AG04449 (cell line): ENCODE measurements at regions of chr7 and their contacts with region 1.

Region 1: DNA sequence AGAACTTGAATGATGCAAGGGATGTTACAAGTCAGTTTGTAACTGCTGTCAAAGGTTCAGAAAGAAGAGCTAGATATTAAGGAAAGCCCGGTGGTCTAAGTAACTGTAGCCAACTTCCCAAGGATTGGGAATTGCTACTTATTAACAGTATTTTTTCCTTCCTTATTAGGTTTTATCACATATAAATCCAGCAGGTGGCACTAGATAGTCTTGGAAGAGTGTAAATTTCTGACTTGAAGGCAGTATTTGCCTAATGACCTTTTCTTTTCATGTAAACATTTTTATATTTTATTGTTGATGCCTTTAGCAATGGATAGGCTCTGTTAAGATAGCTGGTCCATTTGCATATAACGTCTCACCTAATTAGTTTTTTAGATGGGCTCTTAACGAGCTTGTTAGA is 51.2 kb downstream of the ANLN start:
- DNase-seq: no peak
- H3K4me3 ChIP-seq: no peak overlapping the region
- CTCF ChIP-seq: no peak

Region 2: GRCh38 chr7:36301914-36302771 is 138.7 kb before region 1 on chr7:
- CTCF ChIA-PET with region 1: no interaction called
- POLR2A ChIA-PET with region 1: no interaction called
- DNase-seq: no peak
- H3K4me3 ChIP-seq: no peak overlapping the region
- CTCF ChIP-seq: no peak

Region 3: GRCh38 chr7:36400630-36401029 is 40.2 kb before region 1 on chr7:
- CTCF ChIA-PET with region 1: interaction called, 10 read pairs
- POLR2A ChIA-PET with region 1: no interaction called
- DNase-seq: peak; percentile 24
- H3K4me3 ChIP-seq: no peak overlapping the region
- CTCF ChIP-seq: no peak

Region 4: GRCh38 chr7:36430186-36430585 is 10.7 kb before region 1 on chr7:
- CTCF ChIA-PET with region 1: interaction called, 34 read pairs
- POLR2A ChIA-PET with region 1: no interaction called
- DNase-seq: no peak
- H3K4me3 ChIP-seq: no peak overlapping the region
- CTCF ChIP-seq: no peak

Region 5: GRCh38 chr7:36456548-36456947 is 15.7 kb after region 1 on chr7:
- CTCF ChIA-PET with region 1: interaction called, 30 read pairs
- POLR2A ChIA-PET with region 1: no interaction called
- DNase-seq: no peak
- H3K4me3 ChIP-seq: no peak overlapping the region
- CTCF ChIP-seq: no peak

Region 6: GRCh38 chr7:37081436-37081835 is 640.6 kb after region 1 on chr7:
- CTCF ChIA-PET with region 1: no interaction called
- POLR2A ChIA-PET with region 1: no interaction called
- DNase-seq: no peak
- H3K4me3 ChIP-seq: no peak overlapping the region
- CTCF ChIP-seq: no peak